Stomach (tissue), 19 donors: ENCODE measurements at regions of chr16 and their contacts with region 1.

Region 1: DNA sequence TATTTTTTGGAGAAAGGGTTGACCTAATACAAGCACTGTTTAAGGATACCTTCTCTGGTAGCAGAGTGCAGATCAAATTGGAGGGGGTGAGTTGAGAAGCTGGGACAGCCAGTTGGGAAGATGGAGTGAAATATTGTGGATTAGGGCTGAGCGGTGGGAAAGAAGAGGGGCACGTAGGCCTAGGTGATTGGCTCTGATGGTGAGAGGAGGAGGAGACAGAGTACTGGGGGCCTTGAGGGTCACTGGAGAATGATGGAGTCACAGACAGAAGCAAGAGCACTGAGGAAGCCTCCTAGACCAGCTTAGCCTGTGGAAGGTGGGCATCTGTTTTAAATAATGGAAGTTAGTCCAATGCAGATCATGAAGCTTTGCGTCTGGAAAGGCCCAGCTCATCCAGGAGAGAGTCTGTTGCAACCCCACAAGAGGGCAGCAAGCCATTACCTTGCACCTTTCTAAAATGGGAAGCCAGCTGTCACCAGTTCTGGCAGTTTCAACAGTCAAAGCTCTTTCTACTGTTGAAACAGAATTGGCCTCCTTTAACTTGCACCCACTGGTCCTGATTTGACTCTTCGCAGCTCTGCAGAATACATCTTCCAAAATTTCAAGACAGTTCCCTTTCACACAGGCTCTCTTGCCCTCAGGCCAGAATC is 11.8 kb downstream of the SLC9A5 start:
- DNase-seq: peak; percentile 61 to 81
- H3K4me3 ChIP-seq: no peak overlapping the region
- H3K27ac ChIP-seq: no peak overlapping the region
- H3K4me1 ChIP-seq: no peaks in the 10 kb centered on the region
- H3K27me3 ChIP-seq: peaks cover 0 to 17% (median 0%) of the 10 kb centered on the region in 3 donors
- CTCF ChIP-seq: peak in 3 of 7 experiments; percentile 37 to 66 (median 38)
- EP300 ChIP-seq: no peak
- POLR2A ChIP-seq: no peak

Region 2: DNA sequence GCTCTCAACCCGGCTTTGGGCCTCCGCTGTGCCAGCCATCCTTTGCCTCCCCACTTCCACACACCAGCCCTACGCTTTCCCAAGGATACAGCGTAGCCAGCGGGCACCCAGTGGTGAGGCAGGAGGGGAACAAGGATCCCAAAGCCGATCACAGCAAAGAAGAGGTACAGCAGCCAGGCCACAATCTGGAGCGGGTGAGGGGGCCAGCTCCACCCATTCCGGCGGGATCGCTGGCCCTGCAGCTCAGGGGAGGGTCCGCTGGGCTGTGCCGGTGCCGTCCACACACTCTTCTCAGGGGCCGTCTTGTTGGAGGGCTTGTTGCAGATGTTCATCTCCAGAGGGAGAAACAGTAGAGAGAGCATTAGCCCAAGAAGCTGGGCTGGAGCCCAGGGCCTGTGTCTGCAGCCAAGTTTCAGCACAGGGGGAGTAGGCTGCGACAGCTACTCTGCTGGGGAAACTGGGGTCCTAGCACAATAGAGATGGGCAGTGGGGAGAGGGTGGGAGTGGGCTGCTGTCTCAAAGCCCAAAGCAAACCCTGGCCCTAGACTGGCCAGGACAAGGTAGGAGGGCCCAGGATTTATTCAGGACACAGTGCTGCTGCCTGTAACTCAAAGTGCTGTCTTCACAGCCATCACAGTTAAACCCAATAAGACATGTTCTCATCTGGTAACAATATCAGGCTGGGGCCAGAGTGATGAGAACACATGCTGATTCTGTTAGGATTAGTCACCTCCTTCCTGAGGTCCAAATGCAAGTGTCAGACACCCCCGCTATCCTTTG is 145.8 kb after region 1 on chr16:
- intact Hi-C with region 1: loop called (anchors 10 kb)
- DNase-seq: peak in 1 of 2 donors; percentile 75
- H3K4me3 ChIP-seq: no peak overlapping the region
- H3K27ac ChIP-seq: peak overlapping the region; percentile 20 to 86 (median 74)
- H3K4me1 ChIP-seq: peaks cover 5 to 37% (median 28%) of the 10 kb centered on the region in 4 donors
- H3K27me3 ChIP-seq: no peaks in the 10 kb centered on the region
- CTCF ChIP-seq: no peak
- EP300 ChIP-seq: no peak
- POLR2A ChIP-seq: no peak

Region 3: GRCh38 chr16:67490335-67491096 is 230.0 kb after region 1 on chr16:
- intact Hi-C with region 1: no loop called
- DNase-seq: no peak
- H3K4me3 ChIP-seq: no peak overlapping the region
- H3K27ac ChIP-seq: peak overlapping the region in 4 of 5 donors; percentile 70 to 79 (median 71)
- H3K4me1 ChIP-seq: peaks cover 19 to 68% (median 30%) of the 10 kb centered on the region in 4 donors
- H3K27me3 ChIP-seq: no peaks in the 10 kb centered on the region
- CTCF ChIP-seq: no peak
- EP300 ChIP-seq: no peak
- POLR2A ChIP-seq: no peak